Lower leg skin (tissue), 4 donors: ENCODE measurements at regions of chr3 and their contacts with region 1.

Region 1: DNA sequence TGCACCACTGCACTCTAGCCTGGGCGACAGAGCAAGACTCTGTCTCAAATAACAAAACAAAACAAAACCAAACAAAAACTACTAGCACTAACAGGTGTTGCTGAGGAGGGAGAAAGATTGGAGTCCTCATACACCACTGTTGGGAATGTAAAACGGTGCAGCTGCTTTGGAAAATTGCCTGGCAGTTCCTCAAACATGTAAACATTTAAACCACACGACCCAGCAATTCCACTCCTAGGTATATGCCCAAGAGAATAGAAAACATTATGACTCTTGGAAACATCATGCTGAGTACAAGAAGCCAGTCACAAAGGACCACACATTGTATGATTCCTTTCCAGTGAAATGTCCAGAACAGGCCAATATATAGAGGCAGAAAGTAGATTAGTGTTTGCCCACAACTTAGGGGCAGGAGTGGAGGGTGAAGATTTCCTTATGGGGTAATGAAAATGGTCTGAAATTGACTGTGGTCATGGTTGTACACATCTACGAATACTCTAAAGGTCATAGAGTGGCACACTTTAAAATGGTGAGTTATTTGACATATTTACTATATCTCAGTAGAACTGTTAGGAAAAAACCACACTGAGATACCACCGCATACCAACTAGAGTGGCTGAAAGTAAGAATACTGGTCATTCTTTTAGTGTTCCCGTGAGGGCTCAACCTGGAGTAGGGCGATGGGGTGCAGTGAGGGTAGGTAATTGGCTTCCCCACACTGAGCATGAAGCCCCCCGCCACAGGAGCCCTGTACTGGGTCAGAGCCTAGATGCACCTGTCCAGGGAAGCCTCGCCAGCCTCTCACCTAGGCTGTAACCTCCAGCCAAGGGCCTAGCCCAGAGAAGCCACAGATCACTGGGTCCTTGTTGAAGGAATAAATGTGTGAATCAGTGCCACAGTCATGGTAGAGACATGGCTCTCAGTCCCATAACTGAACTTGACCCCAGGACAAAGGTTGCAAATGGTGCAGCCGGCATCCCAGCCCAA is 131.1 kb downstream of the NUP210 start:
- DNase-seq: no peak
- H3K4me3 ChIP-seq: no peak overlapping the region
- CTCF ChIP-seq: no peak
- POLR2A ChIP-seq: no peak

Region 2: DNA sequence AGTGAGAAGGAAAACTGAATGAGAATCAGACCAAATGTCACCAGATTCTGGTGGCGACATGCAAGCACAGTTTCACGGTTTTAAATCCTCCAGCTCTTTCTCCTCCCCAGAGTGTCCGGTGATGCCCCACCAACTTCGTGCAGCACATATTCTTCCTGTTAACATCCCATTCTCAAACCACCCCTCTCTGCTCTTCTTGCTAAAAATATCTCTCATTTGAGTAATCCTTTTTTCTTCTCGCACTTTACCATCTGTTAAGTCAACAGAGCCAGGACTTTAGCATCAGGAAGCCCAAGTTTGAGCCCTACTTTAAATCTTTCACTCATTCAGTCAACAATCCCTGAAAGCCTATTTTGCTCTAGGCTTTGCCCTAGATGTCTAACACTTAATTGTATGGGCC is 1577.1 kb before region 1 on chr3:
- intact Hi-C with region 1: loop called (anchors 5 kb)
- DNase-seq: peak in 1 of 2 donors; percentile 34
- H3K4me3 ChIP-seq: no peak overlapping the region
- CTCF ChIP-seq: no peak
- POLR2A ChIP-seq: no peak

Region 3: GRCh38 chr3:13581485-13582380 is 292.7 kb after region 1 on chr3:
- intact Hi-C with region 1: no loop called
- DNase-seq: no peak
- H3K4me3 ChIP-seq: no peak overlapping the region
- CTCF ChIP-seq: no peak
- POLR2A ChIP-seq: no peak